ENCODE measurements at regions of chr4 and their contacts with region 1.

Region 1: GRCh38 chr4:121869841-121870656 is at the start of gene BBS7:
- DNase-seq: peak; percentile 79 to 93 (median 89)
- ATAC-seq: peak; percentile 98
- H3K4me3 ChIP-seq: peak within 1 kb of the TSS; percentile 99
- H3K4me3 Mint-ChIP-seq: peak within 1 kb of the TSS; percentile 88 to 98 (median 97)
- H3K27ac ChIP-seq: peak within 1 kb of the TSS; percentile 77
- H3K27ac Mint-ChIP-seq: peak within 1 kb of the TSS; percentile 69 to 95 (median 90)
- H3K4me1 ChIP-seq: peaks cover 0 to 10% of the 10 kb centered on the region in 2 donors
- H3K4me1 Mint-ChIP-seq: peaks cover 9 to 17% (median 15%) of the 10 kb centered on the region in 7 donors
- H3K27me3 ChIP-seq: no peaks in the 10 kb centered on the region
- H3K27me3 Mint-ChIP-seq: peaks cover 0 to 30% (median 12%) of the 10 kb centered on the region in 5 donors
- total RNA-seq, gene BBS7: 3.7 to 13.1 (median 8.1) TPM

Region 2: DNA sequence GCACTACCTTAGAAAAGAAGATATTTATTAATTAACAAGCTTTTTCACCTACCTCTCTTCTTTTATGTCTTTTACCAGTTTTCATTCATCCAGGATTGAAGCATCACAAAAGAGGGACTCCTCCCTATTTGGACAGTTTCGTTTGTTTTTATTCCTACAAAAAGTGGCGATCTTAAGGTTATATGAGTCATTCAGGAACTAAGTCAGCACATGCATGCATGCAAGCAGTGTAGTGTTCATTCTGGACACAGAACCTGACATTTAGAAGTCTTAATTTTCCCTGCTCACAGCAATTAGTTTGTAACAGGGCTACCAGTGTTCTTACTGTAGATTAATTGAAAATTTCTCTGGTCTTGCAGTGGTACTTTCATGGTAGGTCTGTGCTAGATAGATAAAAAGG is 441.3 kb before region 1 on chr4:
- CTCF ChIA-PET with region 1: no interaction called
- POLR2A ChIA-PET with region 1: no interaction called
- intact Hi-C with region 1: no loop called
- DNase-seq: no peak
- ATAC-seq: no peak
- H3K4me3 ChIP-seq: no peak overlapping the region
- H3K4me3 Mint-ChIP-seq: no peak overlapping the region
- H3K27ac ChIP-seq: no peak overlapping the region
- H3K27ac Mint-ChIP-seq: no peak overlapping the region
- H3K4me1 ChIP-seq: no peaks in the 10 kb centered on the region
- H3K4me1 Mint-ChIP-seq: peaks cover 0 to 2% (median 0%) of the 10 kb centered on the region in 7 donors
- H3K27me3 ChIP-seq: peaks cover 0 to 3% of the 10 kb centered on the region in 2 donors
- H3K27me3 Mint-ChIP-seq: peaks cover 2 to 26% (median 17%) of the 10 kb centered on the region in 5 donors

Region 3: GRCh38 chr4:121696581-121697461 is 173.2 kb before region 1 on chr4 and contains the start of gene ANXA5:
- CTCF ChIA-PET with region 1: no interaction called
- POLR2A ChIA-PET with region 1: no interaction called
- intact Hi-C with region 1: loop called in 1 of 2 experiments (anchors 2 kb)
- DNase-seq: peak; percentile 8 to 85 (median 41)
- ATAC-seq: peak; percentile 92
- H3K4me3 ChIP-seq: peak within 1 kb of the TSS; percentile 87
- H3K4me3 Mint-ChIP-seq: peak within 1 kb of the TSS; percentile 94 to 99 (median 97)
- H3K27ac ChIP-seq: peak within 1 kb of the TSS; percentile 39
- H3K27ac Mint-ChIP-seq: peak within 1 kb of the TSS; percentile 67 to 99 (median 87)
- H3K4me1 ChIP-seq: peaks cover 4 to 13% of the 10 kb centered on the region in 2 donors
- H3K4me1 Mint-ChIP-seq: peaks cover 12 to 43% (median 19%) of the 10 kb centered on the region in 7 donors
- H3K27me3 ChIP-seq: no peaks in the 10 kb centered on the region
- H3K27me3 Mint-ChIP-seq: peaks cover 0 to 43% (median 28%) of the 10 kb centered on the region in 5 donors
- total RNA-seq, gene ANXA5: 25.5 to 180 (median 49.5) TPM

Region 4: GRCh38 chr4:122309988-122310626 is 440.1 kb after region 1 on chr4:
- CTCF ChIA-PET with region 1: no interaction called
- POLR2A ChIA-PET with region 1: no interaction called
- intact Hi-C with region 1: no loop called
- DNase-seq: peak in 3 of 9 donors; percentile 2 to 8 (median 7)
- ATAC-seq: no peak
- H3K4me3 ChIP-seq: no peak overlapping the region
- H3K4me3 Mint-ChIP-seq: no peak overlapping the region
- H3K27ac ChIP-seq: no peak overlapping the region
- H3K27ac Mint-ChIP-seq: no peak overlapping the region
- H3K4me1 ChIP-seq: no peaks in the 10 kb centered on the region
- H3K4me1 Mint-ChIP-seq: peaks cover 0 to 4% (median 0%) of the 10 kb centered on the region in 7 donors
- H3K27me3 ChIP-seq: no peaks in the 10 kb centered on the region
- H3K27me3 Mint-ChIP-seq: no peaks in the 10 kb centered on the region